ENCODE measurements at regions of chr1 and their contacts with region 1.

Region 1: DNA sequence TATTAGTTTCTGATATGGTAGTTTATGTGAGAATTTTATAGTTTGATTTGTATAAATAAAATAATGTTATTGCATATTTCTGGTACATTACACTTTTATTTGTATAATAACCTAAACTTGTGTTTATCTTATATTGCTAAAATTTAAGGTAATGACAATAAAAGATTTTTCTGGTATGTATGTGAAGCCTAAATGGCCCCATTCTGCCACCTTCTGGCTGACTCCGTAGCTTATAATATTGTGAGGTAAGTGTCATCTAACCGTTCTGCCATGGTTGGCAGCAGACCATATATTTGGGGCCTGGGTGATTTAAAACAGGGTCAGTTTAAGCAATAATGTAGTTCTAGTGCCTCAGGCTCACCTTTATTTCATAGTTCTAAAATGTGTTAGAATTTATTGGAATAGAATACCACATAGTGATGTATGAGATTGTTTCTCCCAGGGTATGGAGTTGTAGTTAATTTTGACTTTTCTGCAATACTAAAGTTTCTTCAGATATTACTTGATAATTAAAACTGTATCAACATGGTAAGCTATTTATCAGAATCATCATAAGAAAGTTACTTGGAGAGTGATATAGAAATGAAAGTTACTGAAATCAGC is 21.2 kb upstream of the PRKACB start:
- DNase-seq: peak in 1 of 2 donors; percentile 28
- ATAC-seq: peak in 1 of 2 donors; percentile 56
- H3K4me3 ChIP-seq: no peak overlapping the region
- H3K27ac ChIP-seq: no peak overlapping the region
- H3K4me1 ChIP-seq: peaks cover 7 to 15% of the 10 kb centered on the region in 2 donors
- H3K27me3 ChIP-seq: no peaks in the 10 kb centered on the region
- CTCF ChIP-seq: peak; percentile 30 to 63 (median 55)
- POLR2A ChIP-seq: no peak

Region 2: GRCh38 chr1:83905315-83905907 is 217.5 kb before region 1 on chr1:
- in situ Hi-C with region 1: no loop called
- intact Hi-C with region 1: loop called (anchors 5 kb)
- DNase-seq: no peak
- ATAC-seq: no peak
- H3K4me3 ChIP-seq: no peak overlapping the region
- H3K27ac ChIP-seq: no peak overlapping the region
- H3K4me1 ChIP-seq: no peaks in the 10 kb centered on the region
- H3K27me3 ChIP-seq: no peaks in the 10 kb centered on the region
- CTCF ChIP-seq: peak in 3 of 5 experiments; percentile 22 to 72 (median 62)
- POLR2A ChIP-seq: no peak

Region 3: DNA sequence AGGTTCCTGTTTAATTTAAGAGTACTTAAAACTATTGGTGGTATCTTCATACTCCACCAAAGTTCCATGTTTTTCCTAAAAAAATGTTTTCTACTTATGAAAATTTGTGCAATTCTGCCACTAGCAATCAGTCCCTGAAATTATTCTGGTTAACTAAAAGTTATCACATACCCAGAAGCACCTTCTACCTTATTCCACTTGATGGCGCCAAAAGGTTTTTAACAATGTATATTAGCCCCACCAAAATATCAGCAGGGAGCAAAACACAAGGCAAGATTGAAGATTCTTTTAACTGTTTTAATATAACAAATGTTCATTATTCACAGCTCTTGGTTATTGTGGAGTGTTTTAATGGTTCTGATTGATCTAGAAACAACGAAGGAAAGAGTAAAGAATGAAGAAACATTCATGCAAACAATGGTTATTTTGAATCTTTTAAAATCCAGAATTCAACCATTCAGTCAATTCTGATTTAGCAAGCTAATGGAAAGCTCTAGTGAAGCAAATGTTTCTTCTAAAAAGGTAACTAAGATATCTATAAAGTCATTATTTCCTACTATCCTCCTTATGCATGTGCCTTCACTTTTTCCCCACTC is 191.1 kb before region 1 on chr1:
- in situ Hi-C with region 1: loop called (anchors 5 to 25 kb)
- intact Hi-C with region 1: loop called (anchors 1 kb)
- DNase-seq: no peak
- ATAC-seq: peak; percentile 61 to 88
- H3K4me3 ChIP-seq: no peak overlapping the region
- H3K27ac ChIP-seq: no peak overlapping the region
- H3K4me1 ChIP-seq: peaks cover 8 to 9% of the 10 kb centered on the region in 2 donors
- H3K27me3 ChIP-seq: no peaks in the 10 kb centered on the region
- CTCF ChIP-seq: peak in 4 of 5 experiments; percentile 58 to 78 (median 68)
- POLR2A ChIP-seq: no peak

Region 4: GRCh38 chr1:83998498-83999315 is 124.2 kb before region 1 on chr1 and contains the start of gene TTLL7:
- in situ Hi-C with region 1: no loop called
- intact Hi-C with region 1: loop called (anchors 5 kb)
- DNase-seq: peak; percentile 51 to 79
- ATAC-seq: peak; percentile 92 to 93
- H3K4me3 ChIP-seq: peak within 1 kb of the TSS; percentile 65 to 93 (median 89)
- H3K27ac ChIP-seq: peak within 1 kb of the TSS; percentile 81 to 90 (median 86)
- H3K4me1 ChIP-seq: peaks cover 13 to 17% of the 10 kb centered on the region in 2 donors
- H3K27me3 ChIP-seq: no peaks in the 10 kb centered on the region
- CTCF ChIP-seq: no peak
- POLR2A ChIP-seq: peak; percentile 56 to 74
- total RNA-seq, gene TTLL7: 8.2 to 22.9 (median 12.3) TPM

Region 5: DNA sequence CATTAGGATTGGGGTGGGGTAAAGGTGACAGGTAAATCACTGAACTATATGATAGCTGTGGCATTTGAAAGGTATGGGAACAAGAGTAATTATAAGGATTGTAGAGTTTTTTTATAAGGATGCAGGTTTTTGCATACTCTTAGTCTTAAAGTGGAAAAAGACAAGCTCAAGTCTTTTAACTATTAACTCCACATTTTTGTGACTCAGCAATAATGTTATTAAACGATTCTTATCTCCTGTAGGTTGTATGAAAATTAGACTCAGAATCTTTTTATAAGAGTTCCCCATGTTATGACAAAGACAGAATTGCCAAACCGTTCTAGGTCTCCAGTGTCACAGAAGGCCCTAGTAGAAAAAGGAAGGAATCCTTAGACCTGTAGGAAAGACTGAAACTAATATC is 74.1 kb before region 1 on chr1:
- in situ Hi-C with region 1: no loop called
- intact Hi-C with region 1: no loop called
- DNase-seq: no peak
- ATAC-seq: no peak
- H3K4me3 ChIP-seq: no peak overlapping the region
- H3K27ac ChIP-seq: no peak overlapping the region
- H3K4me1 ChIP-seq: no peaks in the 10 kb centered on the region
- H3K27me3 ChIP-seq: no peaks in the 10 kb centered on the region
- CTCF ChIP-seq: no peak
- POLR2A ChIP-seq: no peak

Region 6: GRCh38 chr1:84077476-84078107 is 45.3 kb before region 1 on chr1:
- in situ Hi-C with region 1: no loop called
- intact Hi-C with region 1: loop called (anchors 5 kb)
- DNase-seq: peak; percentile 12 to 42
- ATAC-seq: peak; percentile 92 to 94
- H3K4me3 ChIP-seq: peak overlapping the region; percentile 78 to 96 (median 80)
- H3K27ac ChIP-seq: peak overlapping the region; percentile 80 to 87 (median 86)
- H3K4me1 ChIP-seq: peaks cover 10 to 14% of the 10 kb centered on the region in 2 donors
- H3K27me3 ChIP-seq: no peaks in the 10 kb centered on the region
- CTCF ChIP-seq: no peak
- POLR2A ChIP-seq: peak in 1 of 2 donors; percentile 40

Region 7: GRCh38 chr1:84181350-84182005 is 58.6 kb after region 1 on chr1:
- in situ Hi-C with region 1: no loop called
- intact Hi-C with region 1: no loop called
- DNase-seq: no peak
- ATAC-seq: no peak
- H3K4me3 ChIP-seq: no peak overlapping the region
- H3K27ac ChIP-seq: no peak overlapping the region
- H3K4me1 ChIP-seq: no peaks in the 10 kb centered on the region
- H3K27me3 ChIP-seq: no peaks in the 10 kb centered on the region
- CTCF ChIP-seq: no peak
- POLR2A ChIP-seq: no peak

Measured in gastrocnemius medialis (tissue), 4 donors.